ENCODE measurements at regions of chr6 and their contacts with region 1.

Region 1: GRCh38 chr6:149431905-149432775 is 32.1 kb downstream of the SUMO4 start:
- DNase-seq: peak; percentile 97
- H3K4me3 Mint-ChIP-seq: no peak overlapping the region
- H3K27ac Mint-ChIP-seq: no peak overlapping the region
- H3K4me1 Mint-ChIP-seq: peaks cover 2% of the 10 kb centered on the region
- H3K27me3 Mint-ChIP-seq: no peaks in the 10 kb centered on the region

Region 2: GRCh38 chr6:148746363-148747144 is 685.6 kb before region 1 on chr6 and contains the start of gene UST:
- CTCF ChIA-PET with region 1: interaction called, 3 read pairs
- intact Hi-C with region 1: loop called (anchors 5 kb)
- DNase-seq: peak; percentile 73
- H3K4me3 Mint-ChIP-seq: peak within 1 kb of the TSS; percentile 83
- H3K27ac Mint-ChIP-seq: peak within 1 kb of the TSS; percentile 25
- H3K4me1 Mint-ChIP-seq: peaks cover 13% of the 10 kb centered on the region
- H3K27me3 Mint-ChIP-seq: peaks cover 48% of the 10 kb centered on the region
- total RNA-seq, gene UST: 0.20 to 0.74 TPM

Region 3: DNA sequence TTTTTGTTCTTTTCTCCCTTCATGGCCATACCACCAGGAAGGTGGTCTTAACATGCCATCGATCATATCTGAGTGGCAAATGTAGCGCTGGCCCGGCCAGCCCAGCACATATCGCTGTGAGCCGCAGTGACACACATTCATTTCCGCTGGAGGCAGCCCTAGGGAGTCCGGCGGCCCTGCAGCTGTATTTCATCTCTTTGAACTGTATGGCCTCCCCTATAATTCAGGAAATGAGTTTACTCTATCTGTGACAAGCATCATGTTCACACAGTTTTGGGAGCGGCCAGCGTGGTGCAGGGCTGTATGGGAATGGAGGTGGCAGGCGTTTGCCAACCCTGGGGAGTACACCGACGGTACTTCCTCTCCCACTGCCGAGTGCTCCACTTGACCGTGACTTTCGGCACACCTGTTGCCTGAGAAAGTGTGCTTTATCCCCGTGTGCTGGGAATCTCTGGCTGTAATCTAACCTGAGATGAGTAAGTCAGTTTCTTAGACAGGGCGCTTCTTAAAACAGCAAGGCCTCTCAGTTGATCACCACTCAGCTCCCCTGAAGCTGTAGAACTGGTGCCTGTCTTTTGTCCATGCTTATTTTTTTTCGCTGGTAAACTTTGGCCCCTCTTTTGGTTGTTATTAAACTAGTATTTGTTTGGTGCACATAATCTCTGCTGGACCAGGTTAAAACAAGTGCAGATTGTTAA is 371.7 kb before region 1 on chr6:
- CTCF ChIA-PET with region 1: interaction called, 10 read pairs
- intact Hi-C with region 1: no loop called
- DNase-seq: peak; percentile 76
- H3K4me3 Mint-ChIP-seq: peak overlapping the region; percentile 62
- H3K27ac Mint-ChIP-seq: peak overlapping the region; percentile 81
- H3K4me1 Mint-ChIP-seq: peaks cover 37% of the 10 kb centered on the region
- H3K27me3 Mint-ChIP-seq: no peaks in the 10 kb centered on the region

Region 4: GRCh38 chr6:149216459-149216858 is 215.7 kb before region 1 on chr6:
- CTCF ChIA-PET with region 1: interaction called, 11 read pairs
- intact Hi-C with region 1: no loop called
- DNase-seq: no peak
- H3K4me3 Mint-ChIP-seq: no peak overlapping the region
- H3K27ac Mint-ChIP-seq: no peak overlapping the region
- H3K4me1 Mint-ChIP-seq: peaks cover 19% of the 10 kb centered on the region
- H3K27me3 Mint-ChIP-seq: no peaks in the 10 kb centered on the region

Region 5: DNA sequence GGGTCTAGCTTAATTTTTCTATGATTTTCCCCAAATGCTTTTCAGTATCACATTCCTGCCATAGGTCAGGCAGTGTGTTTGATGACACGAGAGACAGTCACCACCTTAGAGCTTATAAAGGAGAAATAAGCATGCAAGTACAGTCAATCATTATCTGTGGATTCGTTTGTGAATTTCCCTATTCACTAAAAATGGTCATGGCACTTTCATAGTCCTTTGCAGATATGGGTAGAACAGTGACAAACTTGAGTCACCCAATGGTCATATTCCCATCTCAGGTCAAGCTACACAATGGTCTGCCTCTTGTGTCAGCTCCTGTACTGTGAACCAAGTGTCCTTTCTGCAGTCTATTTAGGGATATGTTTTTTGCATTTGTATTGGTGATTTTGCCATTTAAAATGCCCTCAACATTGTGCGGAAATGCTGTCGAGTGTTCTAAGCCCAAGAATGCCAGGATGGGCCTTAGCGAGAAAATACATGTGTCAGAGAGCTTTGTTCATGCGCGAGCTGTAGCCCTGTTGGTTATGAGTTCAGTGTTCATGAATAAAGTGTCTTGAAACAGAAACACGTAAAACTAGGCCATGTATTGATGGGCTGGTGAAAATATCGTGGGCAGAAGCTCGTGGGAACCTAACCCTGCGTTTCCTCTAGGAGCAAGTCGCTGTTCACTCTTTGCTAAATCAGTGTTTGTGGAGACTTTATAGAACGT is 12.3 kb before region 1 on chr6:
- CTCF ChIA-PET with region 1: interaction called, 30 read pairs
- intact Hi-C with region 1: no loop called
- DNase-seq: no peak
- H3K4me3 Mint-ChIP-seq: no peak overlapping the region
- H3K27ac Mint-ChIP-seq: no peak overlapping the region
- H3K4me1 Mint-ChIP-seq: peaks cover 16% of the 10 kb centered on the region
- H3K27me3 Mint-ChIP-seq: no peaks in the 10 kb centered on the region